Tibial artery (tissue), 4 donors: ENCODE measurements at regions of chr4 and their contacts with region 1.

Region 1: GRCh38 chr4:98928505-98929340 is at the start of gene EIF4E:
- DNase-seq: peak; percentile 97 to 98
- H3K4me3 ChIP-seq: peak within 1 kb of the TSS; percentile 82 to 96
- H3K27ac ChIP-seq: peak within 1 kb of the TSS; percentile 90 to 94
- H3K4me1 ChIP-seq: peaks cover 0 to 29% (median 13%) of the 10 kb centered on the region in 4 donors
- H3K27me3 ChIP-seq: no peaks in the 10 kb centered on the region
- CTCF ChIP-seq: no peak

Region 2: GRCh38 chr4:98260579-98261290 is 668.0 kb before region 1 on chr4:
- intact Hi-C with region 1: loop called (anchors 10 kb)
- DNase-seq: peak; percentile 96 to 98
- H3K4me3 ChIP-seq: peak overlapping the region; percentile 80 to 83
- H3K27ac ChIP-seq: peak overlapping the region; percentile 95 to 97
- H3K4me1 ChIP-seq: peaks cover 0 to 23% (median 8%) of the 10 kb centered on the region in 4 donors
- H3K27me3 ChIP-seq: no peaks in the 10 kb centered on the region
- CTCF ChIP-seq: no peak

Region 3: GRCh38 chr4:98873059-98873458 is 55.7 kb before region 1 on chr4:
- intact Hi-C with region 1: no loop called
- DNase-seq: no peak
- H3K4me3 ChIP-seq: no peak overlapping the region
- H3K27ac ChIP-seq: no peak overlapping the region
- H3K4me1 ChIP-seq: no peaks in the 10 kb centered on the region
- H3K27me3 ChIP-seq: no peaks in the 10 kb centered on the region
- CTCF ChIP-seq: no peak

Region 4: DNA sequence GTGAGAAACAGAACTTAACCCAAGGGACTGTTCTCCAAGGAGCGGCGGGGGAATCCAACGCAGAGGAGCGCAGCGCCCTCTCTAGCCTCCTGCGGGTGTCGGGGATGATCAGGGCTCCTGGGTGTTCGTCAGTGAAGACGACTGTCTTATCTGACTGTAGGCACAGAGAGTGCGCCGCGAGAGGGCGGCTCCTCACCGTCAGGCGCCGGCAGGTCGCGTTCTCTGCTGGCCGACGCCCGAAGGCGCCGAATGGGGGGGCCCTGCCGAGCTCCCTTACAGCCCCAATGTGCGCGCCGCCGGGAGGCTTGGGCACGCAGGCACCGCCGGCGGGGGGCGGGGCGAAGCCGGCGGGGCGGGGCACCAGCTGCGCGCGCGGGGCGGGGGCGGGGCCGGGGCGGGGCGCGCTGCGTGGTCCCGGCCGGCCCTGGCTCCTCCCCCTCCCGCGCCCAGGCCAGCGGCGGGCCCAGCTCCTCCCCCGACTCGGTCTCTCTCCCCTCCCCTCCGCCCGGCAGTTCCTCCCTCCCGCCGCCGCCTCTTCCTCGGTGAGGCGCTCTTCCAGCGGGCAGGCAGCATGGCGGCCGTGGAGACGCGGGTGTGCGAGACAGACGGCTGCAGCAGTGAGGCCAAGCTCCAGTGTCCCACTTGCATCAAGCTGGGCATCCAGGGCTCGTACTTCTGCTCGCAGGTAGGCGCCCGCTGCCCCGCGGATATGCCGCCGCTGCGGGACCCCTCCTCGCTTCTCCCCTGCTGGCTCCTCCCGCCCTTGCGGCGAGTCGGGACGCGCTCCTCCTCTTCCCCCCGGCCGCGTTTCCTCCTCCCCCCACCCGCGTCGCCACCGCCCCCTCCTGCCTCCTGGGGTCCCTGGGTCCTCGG is 66.7 kb after region 1 on chr4 and contains the start of gene METAP1:
- intact Hi-C with region 1: loop called (anchors 1 kb)
- DNase-seq: peak; percentile 90 to 94
- H3K4me3 ChIP-seq: peak within 1 kb of the TSS; percentile 79 to 100
- H3K27ac ChIP-seq: peak within 1 kb of the TSS; percentile 87
- H3K4me1 ChIP-seq: peaks cover 0 to 30% (median 3%) of the 10 kb centered on the region in 4 donors
- H3K27me3 ChIP-seq: no peaks in the 10 kb centered on the region
- CTCF ChIP-seq: peak; percentile 37 to 44

Region 5: DNA sequence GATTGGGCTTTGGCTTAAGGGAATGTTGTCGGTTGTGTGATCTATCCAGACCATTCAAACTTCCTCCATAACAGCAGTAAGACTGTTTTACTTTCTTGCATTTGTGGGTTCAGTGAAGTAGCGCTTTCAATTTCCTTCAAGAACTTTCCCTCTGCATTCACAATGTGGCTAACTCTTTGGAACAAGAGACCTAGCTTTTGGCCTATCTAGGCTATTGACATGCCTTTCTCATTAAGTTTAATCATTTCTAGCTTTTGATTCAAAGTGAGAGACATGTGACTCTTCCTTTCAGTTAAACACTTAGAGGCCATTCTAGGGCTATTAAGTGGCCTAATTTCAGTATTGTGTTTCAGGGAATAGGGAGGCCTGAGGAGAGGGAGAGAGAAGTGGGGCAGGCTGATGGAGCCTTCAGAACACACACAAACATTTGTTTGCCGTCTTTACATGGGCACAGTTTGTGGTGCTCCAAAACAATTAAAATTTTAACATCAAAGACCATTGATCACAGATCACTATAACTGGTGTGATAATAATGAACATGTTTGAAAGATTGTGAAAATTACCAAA is 125.8 kb after region 1 on chr4:
- intact Hi-C with region 1: loop called (anchors 10 kb)
- DNase-seq: no peak
- H3K4me3 ChIP-seq: no peak overlapping the region
- H3K27ac ChIP-seq: no peak overlapping the region
- H3K4me1 ChIP-seq: peaks cover 0 to 6% (median 0%) of the 10 kb centered on the region in 4 donors
- H3K27me3 ChIP-seq: no peaks in the 10 kb centered on the region
- CTCF ChIP-seq: no peak

Region 6: DNA sequence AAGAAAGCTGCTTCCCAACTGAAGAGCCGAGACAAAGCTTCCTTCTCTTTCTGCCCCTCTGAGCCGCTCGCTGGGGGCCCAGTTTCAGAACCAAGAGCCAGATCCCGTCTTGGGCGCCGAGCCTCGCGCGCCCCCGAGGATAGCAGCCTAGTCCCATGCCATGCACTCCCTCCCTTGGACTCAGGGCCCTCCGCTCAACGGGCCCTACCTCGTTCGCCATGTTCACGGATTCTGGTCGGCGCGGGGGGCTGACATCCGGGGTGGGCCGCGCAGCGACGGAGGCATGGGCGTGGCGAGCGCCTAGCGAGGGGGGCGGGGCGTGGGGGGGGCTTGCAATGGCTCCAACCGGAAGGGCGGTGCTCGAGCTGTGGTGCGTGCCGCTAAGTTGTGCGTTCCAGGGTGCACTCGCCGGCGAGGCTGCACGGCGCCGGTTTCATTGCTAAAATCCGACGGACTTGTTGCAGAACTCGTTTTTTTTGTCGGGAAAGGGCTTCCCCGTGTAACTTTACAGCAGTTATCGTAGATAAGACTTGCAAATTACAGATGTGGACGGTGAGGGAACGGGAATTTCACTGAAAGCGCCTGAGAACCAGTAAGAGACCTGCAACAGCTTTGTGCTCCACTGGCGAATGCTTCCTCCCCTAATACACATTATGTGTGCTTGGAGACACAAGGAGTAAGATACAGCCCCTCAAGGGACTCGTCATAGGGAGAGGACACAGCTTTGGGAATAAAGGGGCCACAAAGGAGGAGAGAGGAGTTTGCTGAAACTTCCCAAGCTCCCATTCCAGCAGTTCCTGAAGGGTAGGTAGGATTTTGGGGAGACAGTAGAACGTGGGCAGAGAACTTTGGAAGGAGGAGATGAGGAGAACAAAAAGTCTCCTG is 160.0 kb after region 1 on chr4 and contains the start of gene ADH5:
- intact Hi-C with region 1: loop called (anchors 10 kb)
- DNase-seq: peak; percentile 90 to 94
- H3K4me3 ChIP-seq: peak within 1 kb of the TSS; percentile 82 to 86
- H3K27ac ChIP-seq: peak within 1 kb of the TSS; percentile 95 to 98
- H3K4me1 ChIP-seq: peaks cover 0 to 61% (median 14%) of the 10 kb centered on the region in 4 donors
- H3K27me3 ChIP-seq: no peaks in the 10 kb centered on the region
- CTCF ChIP-seq: no peak